Esophagus muscularis mucosa (tissue), 4 donors: ENCODE measurements at regions of chr15 and their contacts with region 1.

Region 1: GRCh38 chr15:70826634-70827033 is 27.3 kb downstream of the LARP6 start:
- DNase-seq: peak; percentile 92
- H3K4me3 ChIP-seq: no peak overlapping the region
- H3K27ac ChIP-seq: peak overlapping the region in 1 of 4 donors; percentile 27
- H3K4me1 ChIP-seq: peaks cover 13 to 25% (median 17%) of the 10 kb centered on the region in 4 donors
- H3K27me3 ChIP-seq: no peaks in the 10 kb centered on the region
- CTCF ChIP-seq: no peak
- EP300 ChIP-seq: no peak
- POLR2A ChIP-seq: no peak

Region 2: GRCh38 chr15:70701891-70702568 is 124.6 kb before region 1 on chr15:
- intact Hi-C with region 1: no loop called
- DNase-seq: no peak
- H3K4me3 ChIP-seq: peak overlapping the region; percentile 38 to 53 (median 47)
- H3K27ac ChIP-seq: peak overlapping the region; percentile 67 to 76 (median 71)
- H3K4me1 ChIP-seq: peaks cover 54 to 55% (median 54%) of the 10 kb centered on the region in 4 donors
- H3K27me3 ChIP-seq: no peaks in the 10 kb centered on the region
- CTCF ChIP-seq: no peak
- EP300 ChIP-seq: no peak
- POLR2A ChIP-seq: no peak

Region 3: DNA sequence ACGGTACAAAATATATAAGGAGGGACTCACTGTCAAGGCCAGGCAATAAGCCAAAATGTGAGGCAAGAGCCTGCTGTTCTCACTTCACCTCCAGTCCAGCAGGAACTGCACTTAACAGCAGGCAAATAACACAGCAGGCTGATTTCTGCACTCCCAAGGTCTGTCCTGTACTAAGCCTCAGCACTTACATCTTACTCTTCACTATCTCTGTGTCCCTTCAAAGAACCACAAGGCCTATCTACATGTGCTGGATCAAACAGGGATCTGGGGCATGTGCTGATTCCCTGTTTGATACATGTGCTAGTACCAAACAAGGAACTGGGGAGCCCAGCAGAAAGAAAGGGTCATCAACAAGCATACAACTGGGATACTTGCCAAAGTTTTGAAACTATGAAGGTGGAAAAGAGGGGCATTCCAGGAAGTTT is 85.5 kb before region 1 on chr15:
- intact Hi-C with region 1: no loop called
- DNase-seq: no peak
- H3K4me3 ChIP-seq: no peak overlapping the region
- H3K27ac ChIP-seq: peak overlapping the region; percentile 71 to 74 (median 74)
- H3K4me1 ChIP-seq: peaks cover 32 to 44% (median 34%) of the 10 kb centered on the region in 4 donors
- H3K27me3 ChIP-seq: no peaks in the 10 kb centered on the region
- CTCF ChIP-seq: no peak
- EP300 ChIP-seq: no peak
- POLR2A ChIP-seq: no peak

Region 4: DNA sequence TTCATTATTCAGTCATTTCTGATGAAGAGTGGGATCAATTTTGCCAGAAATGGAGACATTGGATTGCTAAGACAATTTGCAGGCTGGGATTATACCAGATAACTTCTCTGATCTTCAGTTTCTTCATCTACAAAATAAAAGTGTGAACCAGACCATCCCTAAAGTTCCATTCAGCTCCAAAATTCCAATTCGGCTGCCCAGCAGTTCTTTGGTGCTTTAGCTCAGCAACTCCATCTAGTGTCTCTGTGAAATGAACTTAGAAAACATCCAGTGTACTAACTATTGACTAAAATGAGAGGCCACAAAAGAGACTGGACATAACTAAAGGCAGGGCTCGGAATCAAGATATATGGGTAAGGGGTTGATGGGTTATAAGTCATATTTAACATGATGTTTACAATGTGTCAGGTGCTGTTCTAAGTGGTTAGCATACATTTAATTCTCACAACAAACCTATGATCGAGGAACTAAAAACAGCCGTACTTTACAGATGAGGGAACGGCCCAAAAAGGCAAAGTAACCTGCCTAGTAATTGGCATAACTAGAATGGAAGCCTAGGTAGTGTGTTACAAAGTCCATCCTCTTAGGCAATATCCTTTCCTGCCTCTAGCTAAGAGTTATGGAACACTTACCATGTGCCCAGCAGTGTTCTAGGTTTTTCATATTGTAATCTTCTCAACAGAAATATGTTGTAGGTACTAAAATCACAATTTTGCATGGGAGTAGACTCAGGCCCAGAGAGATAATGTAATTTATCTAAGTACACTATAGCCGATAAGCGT is 48.6 kb after region 1 on chr15:
- intact Hi-C with region 1: loop called (anchors 2 kb)
- DNase-seq: no peak
- H3K4me3 ChIP-seq: no peak overlapping the region
- H3K27ac ChIP-seq: no peak overlapping the region
- H3K4me1 ChIP-seq: peaks cover under 1 to 8% (median 6%) of the 10 kb centered on the region in 4 donors
- H3K27me3 ChIP-seq: no peaks in the 10 kb centered on the region
- CTCF ChIP-seq: peak; percentile 44 to 56 (median 54)
- EP300 ChIP-seq: no peak
- POLR2A ChIP-seq: no peak

Region 5: DNA sequence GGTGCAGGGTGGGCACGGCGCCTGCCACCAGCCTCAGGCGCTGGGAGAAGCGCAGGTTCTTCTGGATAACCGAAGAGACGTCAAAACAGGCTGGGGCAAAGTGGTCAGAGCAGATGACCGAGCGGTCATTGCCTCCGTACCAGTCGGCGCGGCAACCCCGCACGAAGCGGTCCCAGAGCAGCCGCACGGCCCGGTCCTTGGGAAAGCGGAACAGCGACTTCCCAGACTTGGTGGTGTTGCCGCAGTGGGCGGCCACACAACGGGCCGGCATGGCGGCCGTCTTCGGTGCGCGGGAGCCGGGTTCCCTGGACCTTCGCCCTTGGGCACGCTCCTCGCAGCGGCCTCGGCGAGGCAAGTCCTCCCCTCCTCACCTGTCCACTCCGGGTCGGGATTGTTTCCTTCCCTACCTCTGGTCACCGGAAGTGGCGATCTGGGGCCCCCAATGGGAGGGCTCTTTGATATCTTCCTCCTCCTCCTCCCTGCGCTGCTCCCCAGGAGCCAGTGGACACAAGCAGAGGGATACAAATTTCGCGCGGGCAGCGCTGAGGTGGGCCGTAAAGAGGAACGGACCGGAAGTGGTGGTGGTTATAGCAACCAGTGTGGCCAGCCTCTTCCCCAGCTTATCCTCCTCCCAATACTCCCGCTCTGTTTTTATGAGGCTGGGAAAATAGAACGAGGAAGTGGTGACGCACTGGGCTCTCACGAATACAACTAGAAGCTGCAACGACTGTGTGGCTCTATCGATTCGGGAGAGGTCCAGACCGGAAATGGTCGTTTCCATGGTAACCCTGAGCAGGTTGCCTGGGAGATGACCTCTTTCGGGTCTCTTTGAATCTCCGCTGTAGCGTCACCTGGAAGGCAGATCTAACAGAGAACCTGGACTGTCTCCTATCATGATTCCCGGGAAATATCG is 65.6 kb after region 1 on chr15 and contains the starts of genes LRRC49 and THAP10:
- intact Hi-C with region 1: loop called (anchors 5 kb)
- DNase-seq: peak; percentile 96
- H3K4me3 ChIP-seq: peak within 1 kb of the TSS; percentile 65 to 82 (median 74)
- H3K27ac ChIP-seq: peak within 1 kb of the TSS; percentile 72 to 84 (median 80)
- H3K4me1 ChIP-seq: peaks cover 3 to 22% (median 18%) of the 10 kb centered on the region in 4 donors
- H3K27me3 ChIP-seq: no peaks in the 10 kb centered on the region
- CTCF ChIP-seq: no peak
- EP300 ChIP-seq: no peak
- POLR2A ChIP-seq: no peak
- total RNA-seq, gene LRRC49: 3.3 to 10.4 (median 7.0) TPM
- total RNA-seq, gene THAP10: 1.3 to 3.4 (median 2.5) TPM